ENCODE measurements at regions of chr22 and their contacts with region 1.

Region 1: GRCh38 chr22:30408414-30409104 is 11.7 kb downstream of the SEC14L2 start:
- DNase-seq: no peak
- ATAC-seq: peak; percentile 61
- H3K4me3 Mint-ChIP-seq: no peak overlapping the region
- H3K27ac Mint-ChIP-seq: no peak overlapping the region
- H3K4me1 Mint-ChIP-seq: peaks cover 15% of the 10 kb centered on the region
- H3K27me3 Mint-ChIP-seq: no peaks in the 10 kb centered on the region
- CTCF ChIP-seq: no peak

Region 2: DNA sequence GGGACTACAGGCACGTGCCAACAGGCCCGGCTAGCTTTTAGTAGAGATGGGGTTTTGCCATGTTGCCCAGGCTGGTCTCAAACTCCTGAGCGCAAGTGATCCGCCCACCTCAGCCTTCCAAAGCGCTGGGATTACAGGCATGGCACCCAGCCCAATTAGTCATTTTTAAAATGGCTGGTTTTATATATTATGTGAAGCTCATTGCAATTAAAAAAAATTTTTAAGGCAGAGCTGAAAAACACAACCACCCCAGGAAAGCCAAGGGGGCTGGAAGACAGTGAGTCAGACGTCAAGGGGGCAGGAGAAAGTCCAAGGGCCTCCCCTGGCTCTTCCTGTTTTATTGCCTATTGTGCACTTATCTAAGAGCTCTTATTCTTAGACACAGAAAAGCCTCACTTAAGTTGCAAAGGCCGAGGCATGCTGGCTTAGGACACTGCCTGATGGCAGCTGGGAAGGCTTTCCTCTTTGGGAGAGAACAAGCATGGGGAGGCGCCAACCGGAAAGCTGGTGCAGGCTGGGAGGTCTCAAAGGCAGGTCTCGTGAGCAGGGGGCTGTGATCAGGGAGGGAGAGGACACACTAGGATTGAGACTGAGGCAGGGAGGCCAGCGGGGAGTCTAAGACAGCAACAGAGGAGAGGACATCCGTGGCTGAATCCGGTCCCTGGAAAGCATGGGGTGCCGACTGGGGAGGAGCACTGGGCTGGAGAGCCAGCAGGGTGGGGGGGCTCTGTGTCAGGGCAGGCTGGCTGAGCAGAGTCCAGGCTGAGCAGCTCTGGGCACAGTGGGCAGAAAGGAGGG is 130.8 kb before region 1 on chr22:
- CTCF ChIA-PET with region 1: no interaction called
- POLR2A ChIA-PET with region 1: no interaction called
- intact Hi-C with region 1: no loop called
- DNase-seq: no peak
- ATAC-seq: no peak
- H3K4me3 Mint-ChIP-seq: no peak overlapping the region
- H3K27ac Mint-ChIP-seq: no peak overlapping the region
- H3K4me1 Mint-ChIP-seq: peaks cover 46% of the 10 kb centered on the region
- H3K27me3 Mint-ChIP-seq: no peaks in the 10 kb centered on the region
- CTCF ChIP-seq: no peak

Region 3: DNA sequence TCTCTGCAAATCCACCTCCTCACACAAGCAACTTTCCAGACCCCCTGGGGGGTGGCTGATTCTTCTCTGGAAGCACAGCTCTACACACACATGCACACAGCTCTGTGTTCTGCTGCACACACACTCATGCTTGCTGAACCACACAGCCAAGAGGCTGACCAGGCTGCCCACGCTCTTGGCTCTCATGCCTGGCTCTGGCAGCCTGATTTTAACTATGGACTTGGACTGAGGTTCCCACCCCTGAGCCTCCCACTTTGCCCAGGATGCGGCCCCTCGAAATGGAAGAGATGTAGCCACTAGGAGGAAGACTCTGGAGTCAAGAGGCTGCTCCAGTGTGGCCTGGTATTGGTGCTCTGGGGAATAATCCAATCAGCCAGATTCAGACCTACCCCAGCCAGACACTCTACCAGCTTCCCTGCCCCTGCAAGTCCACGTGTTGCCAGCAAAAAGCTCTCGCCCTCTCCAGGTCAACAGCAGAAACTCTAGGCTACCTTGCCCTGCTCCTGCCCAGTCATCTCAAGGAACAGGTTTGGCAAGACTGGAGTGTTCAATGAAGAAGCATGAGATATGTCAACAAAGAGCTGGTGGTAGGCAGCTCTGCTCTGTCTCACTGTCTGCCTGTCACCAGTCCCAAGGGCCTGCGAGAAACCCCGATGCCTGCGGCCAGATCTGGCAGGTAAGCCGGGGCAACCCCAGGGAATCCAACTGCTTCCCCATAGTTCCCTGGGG is 110.4 kb before region 1 on chr22:
- CTCF ChIA-PET with region 1: no interaction called
- POLR2A ChIA-PET with region 1: no interaction called
- intact Hi-C with region 1: no loop called
- DNase-seq: no peak
- ATAC-seq: no peak
- H3K4me3 Mint-ChIP-seq: no peak overlapping the region
- H3K27ac Mint-ChIP-seq: peak overlapping the region; percentile 51
- H3K4me1 Mint-ChIP-seq: peaks cover 69% of the 10 kb centered on the region
- H3K27me3 Mint-ChIP-seq: no peaks in the 10 kb centered on the region
- CTCF ChIP-seq: no peak

Region 4: DNA sequence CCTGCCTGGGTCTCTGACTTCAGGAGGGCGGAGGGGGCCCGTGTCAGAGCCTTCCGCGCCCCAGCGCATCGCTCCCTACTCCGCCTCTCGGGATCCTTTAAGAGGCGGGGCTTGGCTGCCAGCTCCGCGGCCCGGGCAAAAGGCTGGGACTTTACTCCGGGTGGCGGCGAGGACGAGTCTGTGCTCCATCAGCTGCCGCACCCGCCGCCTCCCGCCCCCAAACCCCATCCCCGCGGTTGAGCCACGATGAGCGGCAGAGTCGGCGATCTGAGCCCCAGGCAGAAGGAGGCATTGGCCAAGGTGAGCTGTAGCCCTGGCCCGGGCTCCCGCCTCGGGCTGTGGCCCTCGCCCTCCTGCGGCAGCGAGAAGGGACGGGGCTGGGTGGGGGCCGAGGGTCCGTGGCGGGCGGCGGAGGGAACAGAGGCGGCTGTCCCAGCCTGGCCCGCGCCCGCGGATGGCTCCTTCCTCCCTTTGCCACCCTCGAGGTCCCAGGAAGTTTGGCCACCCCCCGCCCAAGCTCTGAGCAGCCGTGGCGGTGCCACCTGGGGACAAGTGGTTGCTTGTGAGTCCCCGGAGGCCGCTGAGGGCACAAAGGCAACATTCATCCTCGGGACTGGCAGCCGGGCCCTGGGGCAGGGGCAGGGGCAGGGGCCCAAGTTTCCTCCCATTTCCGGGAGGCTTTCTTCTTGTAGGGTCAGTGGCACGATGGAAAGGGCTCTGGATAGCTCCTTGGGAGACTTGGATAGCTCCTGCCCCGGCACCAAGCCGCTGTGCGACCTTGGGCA is 11.5 kb before region 1 on chr22 and contains the start of gene SEC14L2:
- CTCF ChIA-PET with region 1: interaction called, 7 read pairs
- POLR2A ChIA-PET with region 1: interaction called, 10 read pairs
- intact Hi-C with region 1: no loop called
- DNase-seq: peak; percentile 75
- ATAC-seq: peak; percentile 83
- H3K4me3 Mint-ChIP-seq: peak within 1 kb of the TSS; percentile 85
- H3K27ac Mint-ChIP-seq: peak within 1 kb of the TSS; percentile 74
- H3K4me1 Mint-ChIP-seq: peaks cover 45% of the 10 kb centered on the region
- H3K27me3 Mint-ChIP-seq: no peaks in the 10 kb centered on the region
- CTCF ChIP-seq: no peak
- total RNA-seq, gene SEC14L2: 15.1 to 15.4 TPM

Region 5: GRCh38 chr22:30591588-30592359 is 183.2 kb after region 1 on chr22 and contains the start of gene PES1:
- CTCF ChIA-PET with region 1: no interaction called
- POLR2A ChIA-PET with region 1: no interaction called
- intact Hi-C with region 1: no loop called
- DNase-seq: peak; percentile 97
- ATAC-seq: peak; percentile 100
- H3K4me3 Mint-ChIP-seq: no peak within 1 kb of the TSS
- H3K27ac Mint-ChIP-seq: no peak within 1 kb of the TSS
- H3K4me1 Mint-ChIP-seq: peaks cover 15% of the 10 kb centered on the region
- H3K27me3 Mint-ChIP-seq: peaks cover 2% of the 10 kb centered on the region
- CTCF ChIP-seq: no peak
- total RNA-seq, gene PES1: 123 to 131 TPM

Measured in activated CD8-positive, alpha-beta T cell treated with anti-CD3 and anti-CD28 coated beads for 36 hours (primary cell).